Transverse colon (tissue), 4 donors: ENCODE measurements at regions of chr14 and their contacts with region 1.

Region 1: GRCh38 chr14:21014761-21015190 is 10.1 kb downstream of the NDRG2 start:
- DNase-seq: peak; percentile 92
- H3K4me3 ChIP-seq: no peak overlapping the region
- H3K27ac ChIP-seq: no peak overlapping the region
- H3K4me1 ChIP-seq: peaks cover 0 to 9% (median 1%) of the 10 kb centered on the region in 4 donors
- H3K27me3 ChIP-seq: no peaks in the 10 kb centered on the region
- CTCF ChIP-seq: peak; percentile 90 to 96 (median 94)
- EP300 ChIP-seq: no peak
- POLR2A ChIP-seq: no peak

Region 2: DNA sequence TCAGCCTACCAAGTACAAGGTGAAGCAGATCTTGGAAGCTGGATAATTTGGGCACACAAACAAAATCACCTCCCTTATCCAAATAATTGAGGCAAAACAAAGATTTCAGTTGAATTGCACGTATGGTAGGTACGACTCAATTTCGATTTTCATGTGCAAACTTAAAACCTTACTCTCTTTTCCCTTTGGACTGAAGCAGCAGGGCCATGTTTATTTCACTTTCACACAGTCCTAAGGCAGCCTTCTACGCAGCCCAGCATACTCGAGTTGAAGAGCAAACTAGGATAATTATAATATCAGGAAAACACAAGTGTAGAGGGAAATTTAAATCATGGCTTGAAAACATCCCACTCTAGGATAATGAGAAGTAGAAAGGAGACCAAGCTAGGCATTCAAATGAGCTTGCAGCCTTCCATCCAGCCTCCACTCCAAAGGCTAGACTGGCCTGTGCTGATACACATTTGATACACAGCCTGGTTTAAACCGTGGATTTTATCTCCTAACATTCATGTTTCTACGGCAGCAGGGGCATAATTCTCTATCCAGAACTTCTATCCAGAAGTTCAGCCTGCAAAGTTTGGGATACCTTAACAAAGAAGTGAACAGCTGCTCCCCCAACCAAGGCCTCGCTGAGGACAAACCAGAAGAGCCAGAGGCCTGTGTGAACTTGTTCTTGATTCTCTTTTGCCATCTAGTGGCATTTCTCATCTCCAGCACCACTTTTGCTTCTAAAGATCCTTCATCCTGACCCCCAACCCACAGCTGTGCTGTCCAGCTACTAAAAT is 25.0 kb after region 1 on chr14:
- in situ Hi-C with region 1: no loop called
- intact Hi-C with region 1: loop called (anchors 2 kb)
- DNase-seq: peak; percentile 45
- H3K4me3 ChIP-seq: no peak overlapping the region
- H3K27ac ChIP-seq: peak overlapping the region; percentile 75 to 83 (median 80)
- H3K4me1 ChIP-seq: peaks cover 28 to 43% (median 31%) of the 10 kb centered on the region in 4 donors
- H3K27me3 ChIP-seq: no peaks in the 10 kb centered on the region
- CTCF ChIP-seq: peak; percentile 59 to 75 (median 63)
- EP300 ChIP-seq: no peak
- POLR2A ChIP-seq: no peak

Region 3: GRCh38 chr14:21092273-21093011 is 77.7 kb after region 1 on chr14:
- in situ Hi-C with region 1: loop called in 2 of 4 experiments (anchors 10 kb)
- intact Hi-C with region 1: no loop called
- DNase-seq: peak; percentile 92
- H3K4me3 ChIP-seq: no peak overlapping the region
- H3K27ac ChIP-seq: peak overlapping the region in 3 of 4 donors; percentile 15 to 52 (median 45)
- H3K4me1 ChIP-seq: peaks cover 11 to 57% (median 42%) of the 10 kb centered on the region in 4 donors
- H3K27me3 ChIP-seq: no peaks in the 10 kb centered on the region
- CTCF ChIP-seq: peak; percentile 100
- EP300 ChIP-seq: no peak
- POLR2A ChIP-seq: no peak

Region 4: GRCh38 chr14:21103710-21104447 is 89.1 kb after region 1 on chr14:
- in situ Hi-C with region 1: no loop called
- intact Hi-C with region 1: loop called (anchors 5 kb)
- DNase-seq: peak; percentile 97
- H3K4me3 ChIP-seq: peak overlapping the region; percentile 39 to 57 (median 50)
- H3K27ac ChIP-seq: peak overlapping the region; percentile 91 to 99 (median 96)
- H3K4me1 ChIP-seq: peaks cover 45 to 71% (median 63%) of the 10 kb centered on the region in 4 donors
- H3K27me3 ChIP-seq: no peaks in the 10 kb centered on the region
- CTCF ChIP-seq: peak; percentile 71 to 97 (median 79)
- EP300 ChIP-seq: no peak
- POLR2A ChIP-seq: peak; percentile 89